ENCODE measurements at regions of chr5 and their contacts with region 1.

Region 1: DNA sequence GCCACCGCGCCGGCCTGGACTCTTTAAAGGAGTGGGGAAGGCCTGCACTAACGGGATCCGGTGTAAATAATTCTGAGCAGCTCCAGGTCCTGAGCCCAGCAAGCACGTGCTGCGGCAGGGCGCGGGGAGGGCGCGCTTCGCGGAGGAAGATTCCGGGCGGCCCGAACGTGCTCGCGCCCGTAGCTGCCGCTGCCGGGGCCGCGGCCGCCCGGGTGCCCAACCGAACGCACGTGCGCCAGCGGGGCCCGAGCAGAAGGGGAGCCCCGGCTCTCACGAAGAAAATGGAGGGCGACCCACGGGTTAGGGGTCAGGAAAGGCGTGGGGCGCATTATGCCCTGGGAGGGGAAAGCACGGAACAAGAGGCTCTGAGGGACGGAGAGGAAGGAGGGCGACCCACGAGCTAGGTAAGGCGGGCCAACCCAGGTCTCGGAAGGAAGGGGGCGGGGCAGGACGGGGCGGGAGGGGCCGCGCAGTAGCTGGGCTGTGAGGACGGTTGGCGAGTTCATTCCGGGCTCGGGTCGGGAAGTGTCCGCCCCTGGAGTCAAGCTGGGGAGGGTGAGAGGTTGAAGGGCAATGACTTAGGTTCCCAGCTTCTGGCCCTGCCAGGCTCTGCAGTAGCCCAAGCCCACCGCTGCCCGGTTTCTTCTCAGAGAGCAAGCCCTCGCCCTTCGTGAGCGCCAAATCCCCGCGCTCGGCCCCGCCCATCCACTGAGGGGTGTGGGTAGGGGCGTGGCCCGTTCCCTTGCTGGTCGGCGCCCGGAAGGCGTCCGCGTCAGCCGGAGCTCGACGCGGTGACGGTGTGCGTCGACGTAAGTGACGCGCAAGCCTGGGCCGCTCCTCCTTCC is at the start of gene ZNF131:
- DNase-seq: peak; percentile 98
- ATAC-seq: peak; percentile 98
- total RNA-seq, gene ZNF131: 14.5 TPM

Region 2: DNA sequence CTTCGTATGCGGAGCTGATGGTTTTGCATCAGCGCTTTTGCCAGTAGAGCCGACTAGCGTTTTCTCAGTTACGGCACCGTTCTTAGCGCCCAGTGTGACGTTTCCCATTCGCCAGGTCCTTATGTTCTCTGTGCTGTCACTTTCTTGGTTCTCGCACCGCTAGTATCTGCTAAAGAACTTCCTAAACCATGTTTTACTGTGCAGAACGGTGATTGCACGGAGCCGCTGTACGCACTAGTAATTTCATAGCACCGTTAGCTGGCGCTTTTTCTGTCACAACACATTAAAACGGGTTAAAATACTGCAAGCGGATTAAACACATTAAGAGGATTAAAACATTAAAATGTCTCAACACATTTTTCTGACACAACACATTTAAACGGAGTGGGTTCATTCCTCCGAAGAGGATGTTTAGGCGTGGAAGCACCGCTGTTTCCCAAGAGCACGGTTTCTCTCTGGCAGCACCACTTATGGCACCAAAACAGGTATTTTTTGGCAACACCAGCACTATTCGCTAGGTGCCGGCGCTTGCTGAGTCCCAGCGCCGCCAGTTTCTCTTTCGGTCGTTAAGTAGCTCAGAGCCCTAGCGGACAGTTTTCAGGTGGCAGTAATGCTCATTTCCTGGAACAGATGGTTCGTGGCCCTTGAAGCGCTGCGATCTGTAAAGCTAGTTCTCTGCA is 101.2 kb before region 1 on chr5:
- intact Hi-C with region 1: no loop called
- DNase-seq: peak; percentile 62
- ATAC-seq: peak; percentile 50

Region 3: DNA sequence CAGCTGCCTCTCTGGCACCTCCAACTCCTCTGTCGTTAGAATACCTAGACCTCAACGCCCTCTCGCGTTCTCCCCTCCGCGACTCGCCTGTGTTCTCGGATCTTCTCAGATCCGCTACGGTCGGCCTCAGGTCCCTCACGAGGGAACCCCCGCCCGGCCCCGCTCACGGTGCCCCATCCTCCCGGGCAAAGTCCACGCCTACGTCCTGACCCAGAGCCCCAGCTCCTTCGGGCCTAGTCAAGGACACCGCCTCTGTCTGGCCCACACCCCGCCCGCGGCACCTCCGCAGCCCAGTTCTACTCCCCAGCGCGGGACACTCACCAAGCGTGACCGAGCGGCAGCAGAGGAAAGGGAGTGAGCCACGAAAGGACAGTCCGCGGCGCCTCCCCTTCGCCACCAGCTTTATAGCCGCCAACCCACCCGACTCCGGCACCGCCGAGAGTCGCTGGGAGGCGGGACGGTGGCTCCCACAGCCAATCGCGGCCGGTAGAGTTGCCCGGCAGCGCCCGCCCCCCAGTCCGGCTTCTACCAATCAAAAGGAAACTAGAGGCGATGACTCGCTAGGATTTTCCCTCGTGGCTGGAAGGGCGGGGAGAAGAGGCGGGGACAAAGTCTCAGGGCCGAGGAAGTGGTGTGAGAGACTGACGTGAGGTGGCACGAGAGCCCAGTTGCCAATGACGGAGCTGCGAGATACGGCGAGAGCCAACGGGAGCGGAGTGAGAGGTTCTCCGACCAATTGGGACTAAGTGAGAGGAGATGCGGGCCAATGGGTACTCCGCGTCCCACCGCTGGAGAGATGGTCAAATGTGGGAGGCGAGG is 192.3 kb after region 1 on chr5 and contains the start of gene HMGCS1:
- intact Hi-C with region 1: loop called (anchors 5 kb)
- DNase-seq: peak; percentile 97
- ATAC-seq: peak; percentile 98
- total RNA-seq, gene HMGCS1: 25.4 TPM

Measured in left ventricle myocardium superior (tissue), 1 donor.